Spleen (tissue), 13 donors: ENCODE measurements at regions of chr14 and their contacts with region 1.

Region 1: DNA sequence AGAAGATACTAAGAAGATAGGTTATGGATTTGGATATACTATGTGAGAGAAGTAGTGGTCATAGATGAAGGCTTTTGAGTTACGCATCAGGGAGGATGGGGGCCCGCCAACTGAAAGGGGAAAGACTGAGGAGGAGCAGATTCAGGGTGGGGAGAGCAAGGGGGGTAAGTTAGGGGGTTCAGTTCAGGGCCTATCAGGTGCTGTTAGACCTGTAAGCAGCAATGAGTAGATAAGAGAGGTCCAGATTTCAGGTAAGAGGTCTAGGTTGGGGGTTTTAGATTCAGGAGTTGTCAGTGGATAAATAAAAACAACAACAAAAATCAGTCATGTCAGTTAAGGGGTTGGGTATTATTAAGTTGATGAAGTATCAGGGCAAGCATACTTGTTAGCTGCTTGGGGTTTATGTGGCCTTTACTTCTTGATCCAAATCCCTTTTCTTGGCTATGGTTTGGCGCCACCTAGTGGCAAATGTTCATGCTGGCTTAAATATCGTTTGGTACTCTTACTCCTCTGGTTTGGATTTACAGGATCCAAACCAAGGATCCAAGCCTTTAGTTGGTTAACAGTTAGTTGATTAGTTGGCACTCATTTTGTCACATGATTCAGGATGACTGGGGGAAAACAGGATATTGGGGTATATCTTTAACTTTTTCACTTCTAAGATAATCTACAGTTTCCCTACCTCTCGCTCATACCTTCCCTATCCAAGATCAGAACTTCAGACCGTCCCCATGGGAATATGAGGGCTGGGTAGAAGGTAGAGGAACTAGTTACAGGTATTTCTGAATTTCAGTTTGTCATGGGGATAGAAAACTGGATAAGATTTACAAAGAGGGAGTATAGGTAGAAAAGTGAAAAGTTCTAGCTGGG is 65.1 kb downstream of the PCNX1 start:
- DNase-seq: peak; percentile 87
- H3K4me3 ChIP-seq: no peak overlapping the region
- H3K27ac ChIP-seq: peak overlapping the region in 3 of 8 donors; percentile 17 to 59 (median 50)
- H3K4me1 ChIP-seq: peaks cover 0 to 44% (median 14%) of the 10 kb centered on the region in 6 donors
- H3K27me3 ChIP-seq: no peaks in the 10 kb centered on the region
- CTCF ChIP-seq: peak; percentile 68 to 93 (median 84)
- POLR2A ChIP-seq: no peak

Region 2: GRCh38 chr14:70816525-70816924 is 155.8 kb before region 1 on chr14:
- intact Hi-C with region 1: loop called (anchors 5 kb)
- DNase-seq: no peak
- H3K4me3 ChIP-seq: no peak overlapping the region
- H3K27ac ChIP-seq: no peak overlapping the region
- H3K4me1 ChIP-seq: peaks cover 4 to 30% (median 16%) of the 10 kb centered on the region in 6 donors
- H3K27me3 ChIP-seq: peaks cover 0 to 21% (median 6%) of the 10 kb centered on the region in 7 donors
- CTCF ChIP-seq: no peak
- POLR2A ChIP-seq: no peak

Region 3: DNA sequence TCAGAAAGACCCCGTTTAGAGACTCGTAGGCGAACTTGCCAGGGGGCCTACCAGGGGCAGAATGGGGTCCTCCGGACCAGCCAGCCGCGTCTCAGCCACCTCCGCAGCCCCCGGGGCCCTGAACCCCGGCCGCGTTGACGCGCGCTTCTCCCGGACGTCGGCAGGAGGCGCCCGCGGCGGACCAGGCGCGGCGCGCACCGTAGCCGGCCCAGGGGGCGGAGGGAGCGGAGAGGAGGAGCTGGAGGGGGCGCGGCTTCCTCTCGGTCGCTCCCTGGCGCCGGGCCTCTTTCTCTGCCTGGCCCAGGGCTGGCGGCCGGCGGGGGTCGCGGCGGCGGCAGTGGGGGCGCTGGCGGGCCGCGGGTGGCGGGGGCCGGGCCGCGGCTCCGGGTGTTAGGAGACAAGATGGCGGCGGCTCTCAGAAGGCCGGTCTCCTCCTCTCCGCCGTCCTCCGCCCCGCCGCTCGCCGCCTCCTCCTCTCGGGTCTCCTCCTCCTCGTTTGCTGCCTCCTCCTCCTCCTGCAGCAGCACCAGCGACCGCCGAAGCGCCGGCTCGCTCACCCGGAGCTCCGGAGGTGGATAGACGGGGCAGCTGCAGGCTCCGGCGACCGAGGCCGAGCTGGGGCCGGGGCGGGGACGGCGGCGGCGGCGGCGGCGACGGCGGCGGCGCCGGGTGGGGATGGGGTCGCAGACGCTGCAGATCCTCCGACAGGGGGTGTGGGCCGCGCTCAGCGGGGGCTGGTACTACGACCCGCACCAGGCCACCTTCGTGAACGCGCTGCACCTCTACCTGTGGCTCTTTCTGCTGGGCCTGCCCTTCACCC is 65.0 kb before region 1 on chr14 and contains the start of gene PCNX1:
- intact Hi-C with region 1: loop called (anchors 5 kb)
- DNase-seq: peak; percentile 98
- H3K4me3 ChIP-seq: peak within 1 kb of the TSS; percentile 78 to 97 (median 90)
- H3K27ac ChIP-seq: peak within 1 kb of the TSS; percentile 88 to 99 (median 96)
- H3K4me1 ChIP-seq: peaks cover 19 to 60% (median 51%) of the 10 kb centered on the region in 6 donors
- H3K27me3 ChIP-seq: no peaks in the 10 kb centered on the region
- CTCF ChIP-seq: peak; percentile 39 to 96 (median 90)
- POLR2A ChIP-seq: peak in 1 of 3 donors; percentile 36
- total RNA-seq, gene PCNX1: 88.1 to 149 (median 104) TPM